Activated T-helper 1 cell treated with anti-CD3 and anti-CD28 coated beads, Interleukin-12 subunit alpha, Interleukin-12 subunit beta, Interleukin-2, Interleukin-4 antibody, amounts not matched to agents 30 ng/mL and 10 ng/mL and 1 ng/mL, durations not matched to agents 14 hours and 24 hours and 36 hours (primary cell): ENCODE measurements at regions of chr13 and their contacts with region 1.

Region 1: DNA sequence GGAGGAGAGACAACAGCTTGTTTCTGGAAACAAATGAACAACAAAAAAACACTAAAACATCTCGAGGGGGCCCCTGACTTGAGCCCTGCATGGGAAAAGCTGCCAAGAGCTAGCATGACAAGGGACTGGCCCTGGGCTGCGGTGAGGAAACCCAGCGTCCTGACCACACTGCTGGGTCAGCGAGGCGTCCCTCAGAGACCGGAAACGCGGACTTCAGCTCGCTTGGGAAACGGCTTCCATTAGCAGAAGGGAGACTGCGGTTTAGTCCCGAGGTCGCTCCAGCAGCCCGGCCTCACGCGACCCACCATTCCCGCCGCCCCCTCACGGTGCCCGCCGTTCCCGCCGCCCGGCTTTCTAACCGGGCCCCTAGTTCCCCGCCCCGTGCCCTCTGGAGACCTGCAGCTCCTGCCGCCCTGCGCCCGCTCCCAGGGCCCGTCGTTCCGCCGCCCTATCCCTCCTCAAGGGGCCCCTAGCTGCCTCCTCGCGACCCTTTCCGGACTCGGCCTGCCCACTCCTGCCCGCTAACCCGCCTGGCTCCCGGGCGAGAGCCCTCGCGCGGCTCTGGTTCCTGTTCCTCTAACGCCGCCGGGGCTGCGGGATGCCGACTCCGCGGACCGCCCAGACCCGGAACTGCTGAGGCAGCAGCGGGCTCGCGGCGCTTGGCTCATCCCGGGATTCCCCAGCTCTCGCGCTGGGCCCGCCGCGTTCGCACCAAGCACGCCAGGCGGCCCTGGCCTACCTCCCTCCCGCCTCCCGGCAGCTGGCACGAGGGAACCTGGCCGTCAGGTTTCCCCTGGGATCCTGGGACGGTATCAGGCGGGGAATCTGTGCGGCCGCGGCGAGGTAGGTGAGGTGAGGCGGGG is at the start of gene CCDC122:
- DNase-seq: peak; percentile 75
- H3K4me3 Mint-ChIP-seq: peak within 1 kb of the TSS; percentile 84
- H3K27ac Mint-ChIP-seq: peak within 1 kb of the TSS; percentile 81
- H3K4me1 Mint-ChIP-seq: peaks cover 28% of the 10 kb centered on the region
- H3K27me3 Mint-ChIP-seq: peaks cover 15% of the 10 kb centered on the region
- total RNA-seq, gene CCDC122: 0.86 and 1.5 TPM in 2 replicates

Region 2: DNA sequence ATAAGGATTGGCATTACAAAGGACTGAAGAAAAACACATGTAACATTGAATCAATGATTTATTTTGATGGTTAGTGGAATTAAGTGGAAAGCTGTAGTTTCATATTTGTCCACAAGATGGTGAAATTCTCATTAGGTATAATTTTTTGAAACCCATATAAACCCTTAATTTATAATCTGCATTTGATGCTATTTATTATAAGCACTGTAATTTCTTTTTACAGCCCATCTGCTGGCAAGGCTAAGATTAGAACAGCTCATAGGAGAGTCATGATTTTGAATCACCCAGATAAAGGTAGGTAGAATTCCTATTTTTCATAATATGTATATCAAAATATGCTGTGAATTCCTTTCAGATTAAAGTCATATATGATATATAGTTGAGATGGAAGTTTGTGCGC is 793.6 kb before region 1 on chr13:
- intact Hi-C with region 1: loop called (anchors 10 kb)
- DNase-seq: no peak
- H3K4me3 Mint-ChIP-seq: no peak overlapping the region
- H3K27ac Mint-ChIP-seq: no peak overlapping the region
- H3K4me1 Mint-ChIP-seq: peaks cover 9% of the 10 kb centered on the region
- H3K27me3 Mint-ChIP-seq: no peaks in the 10 kb centered on the region

Region 3: DNA sequence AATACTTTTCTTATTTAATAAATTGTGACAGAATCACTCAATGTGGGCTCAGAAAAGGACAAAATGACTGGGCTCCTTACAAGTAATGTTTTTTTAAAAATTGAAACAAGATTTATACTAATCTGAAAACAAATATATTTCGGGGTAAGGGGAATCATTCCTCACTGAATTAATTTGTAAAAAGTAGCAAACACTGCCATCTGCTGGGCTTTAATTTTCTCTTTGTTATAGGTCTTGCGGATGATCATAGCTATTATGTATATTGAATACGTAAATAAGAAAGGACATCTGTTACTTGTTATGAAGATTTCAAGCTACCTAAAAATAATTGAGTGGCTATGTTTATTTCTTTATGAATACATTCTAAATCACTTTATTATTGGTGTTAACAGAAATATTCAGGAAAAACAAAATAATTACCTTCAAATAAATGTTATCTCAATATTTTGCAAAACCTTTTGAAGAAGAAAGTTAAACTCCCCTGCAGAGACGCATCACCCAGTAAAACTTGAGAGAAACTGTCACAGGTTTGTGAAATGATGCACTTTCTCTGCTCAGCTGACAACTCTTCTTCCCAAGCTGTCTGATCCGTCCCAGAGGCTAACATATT is 74.6 kb before region 1 on chr13:
- intact Hi-C with region 1: loop called (anchors 5 kb)
- DNase-seq: no peak
- H3K4me3 Mint-ChIP-seq: no peak overlapping the region
- H3K27ac Mint-ChIP-seq: no peak overlapping the region
- H3K4me1 Mint-ChIP-seq: peaks cover 4% of the 10 kb centered on the region
- H3K27me3 Mint-ChIP-seq: peaks cover 3% of the 10 kb centered on the region

Region 4: DNA sequence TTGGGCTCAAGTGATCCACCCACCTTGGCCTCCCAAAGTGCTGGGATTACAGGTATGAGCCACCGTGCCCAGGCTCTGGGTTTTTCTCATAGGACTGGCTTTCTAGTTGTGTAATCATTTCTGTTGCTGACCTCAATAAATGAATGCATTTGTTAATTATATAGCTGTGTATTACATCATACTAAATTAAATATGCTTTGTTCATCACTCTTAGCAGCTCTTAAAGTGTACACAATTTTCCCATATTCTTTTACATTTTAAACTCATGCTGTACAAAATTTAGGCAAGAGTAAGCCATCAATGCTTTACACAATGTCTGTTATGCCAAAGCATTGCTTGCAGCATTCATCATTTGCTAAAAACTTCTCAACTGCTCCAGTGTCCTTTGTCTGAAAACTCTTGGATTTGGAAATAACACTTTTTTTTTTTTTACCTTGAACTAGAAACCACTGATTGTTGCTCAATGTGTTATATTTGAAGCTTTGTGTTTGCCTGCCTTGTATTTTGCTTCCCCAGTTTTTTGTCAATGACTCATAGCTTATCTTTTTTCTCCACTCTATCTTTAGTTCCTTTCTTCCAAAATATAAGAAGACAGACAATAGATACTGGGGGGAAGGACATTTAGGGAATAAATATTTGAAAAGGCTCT is 31.0 kb before region 1 on chr13:
- intact Hi-C with region 1: no loop called
- DNase-seq: no peak
- H3K4me3 Mint-ChIP-seq: no peak overlapping the region
- H3K27ac Mint-ChIP-seq: no peak overlapping the region
- H3K4me1 Mint-ChIP-seq: no peaks in the 10 kb centered on the region
- H3K27me3 Mint-ChIP-seq: peaks cover 16% of the 10 kb centered on the region

Region 5: DNA sequence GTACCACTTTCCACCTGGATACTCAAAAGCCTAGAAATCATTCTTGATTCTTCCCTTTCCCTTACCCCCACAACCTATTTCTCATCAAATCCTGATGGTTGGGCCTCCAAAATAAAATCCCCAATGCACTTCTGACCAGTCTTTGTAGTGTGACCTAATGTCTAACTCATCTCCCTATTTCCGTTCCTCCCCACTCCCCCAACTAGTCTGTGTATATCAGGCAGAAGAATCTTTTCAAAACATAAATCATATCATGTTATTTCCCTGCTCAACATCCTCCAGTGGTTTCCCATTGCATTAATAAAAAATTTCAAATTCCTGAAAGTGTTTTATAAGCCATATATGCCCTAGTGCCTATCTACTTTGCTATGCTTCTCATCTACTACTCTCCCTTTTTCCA is 17.3 kb before region 1 on chr13:
- intact Hi-C with region 1: no loop called
- DNase-seq: no peak
- H3K4me3 Mint-ChIP-seq: no peak overlapping the region
- H3K27ac Mint-ChIP-seq: no peak overlapping the region
- H3K4me1 Mint-ChIP-seq: no peaks in the 10 kb centered on the region
- H3K27me3 Mint-ChIP-seq: peaks cover 3% of the 10 kb centered on the region